Naive thymus-derived CD4-positive, alpha-beta T cell (primary cell): ENCODE measurements at regions of chr1 and their contacts with region 1.

Region 1: GRCh38 chr1:157156058-157156541 is 17.9 kb upstream of the ETV3 start:
- DNase-seq: peak; percentile 52 to 81 (median 67)
- ATAC-seq: peak; percentile 84
- H3K4me3 ChIP-seq: no peak overlapping the region
- H3K4me3 Mint-ChIP-seq: peak overlapping the region in 8 of 10 donors; percentile 52 to 73 (median 65)
- H3K27ac ChIP-seq: no peak overlapping the region
- H3K27ac Mint-ChIP-seq: peak overlapping the region in 2 of 9 donors; percentile 26 to 51
- H3K4me1 ChIP-seq: peaks cover 8 to 28% of the 10 kb centered on the region in 2 donors
- H3K4me1 Mint-ChIP-seq: peaks cover 15 to 36% (median 26%) of the 10 kb centered on the region in 7 donors
- H3K27me3 ChIP-seq: no peaks in the 10 kb centered on the region
- H3K27me3 Mint-ChIP-seq: peaks cover 6 to 22% (median 9%) of the 10 kb centered on the region in 5 donors

Region 2: DNA sequence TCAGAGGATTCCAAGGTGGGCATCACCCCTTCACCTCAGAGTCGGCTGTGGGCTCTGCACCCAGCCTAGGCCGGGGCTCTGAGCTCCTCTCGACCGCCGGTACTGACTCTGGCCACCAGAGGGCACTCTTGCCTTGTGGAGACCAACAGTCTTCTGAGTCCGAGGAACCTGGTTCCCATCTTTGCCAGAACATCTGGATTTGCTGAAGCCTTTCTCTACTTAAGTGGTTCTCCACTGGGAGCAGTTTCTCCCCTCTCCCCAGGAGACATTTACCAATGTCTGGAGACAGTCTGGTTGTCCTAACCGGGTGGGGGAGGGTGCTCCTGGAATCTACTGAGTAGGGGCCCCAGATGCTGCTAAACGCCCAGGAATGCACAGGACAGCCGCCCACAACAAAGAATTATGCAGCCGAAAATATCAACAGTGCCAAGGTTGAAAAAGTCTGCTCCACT is 65.9 kb before region 1 on chr1:
- CTCF ChIA-PET with region 1: interaction called, 292 read pairs
- POLR2A ChIA-PET with region 1: interaction called, 10 read pairs
- intact Hi-C with region 1: loop called (anchors 1 kb)
- DNase-seq: peak; percentile 64 to 88 (median 81)
- ATAC-seq: peak; percentile 91
- H3K4me3 ChIP-seq: no peak overlapping the region
- H3K4me3 Mint-ChIP-seq: no peak overlapping the region
- H3K27ac ChIP-seq: no peak overlapping the region
- H3K27ac Mint-ChIP-seq: no peak overlapping the region
- H3K4me1 ChIP-seq: peaks cover 0 to 4% of the 10 kb centered on the region in 2 donors
- H3K4me1 Mint-ChIP-seq: peaks cover 0 to 8% (median 0%) of the 10 kb centered on the region in 7 donors
- H3K27me3 ChIP-seq: no peaks in the 10 kb centered on the region
- H3K27me3 Mint-ChIP-seq: peaks cover 0 to 11% (median 0%) of the 10 kb centered on the region in 5 donors

Region 3: DNA sequence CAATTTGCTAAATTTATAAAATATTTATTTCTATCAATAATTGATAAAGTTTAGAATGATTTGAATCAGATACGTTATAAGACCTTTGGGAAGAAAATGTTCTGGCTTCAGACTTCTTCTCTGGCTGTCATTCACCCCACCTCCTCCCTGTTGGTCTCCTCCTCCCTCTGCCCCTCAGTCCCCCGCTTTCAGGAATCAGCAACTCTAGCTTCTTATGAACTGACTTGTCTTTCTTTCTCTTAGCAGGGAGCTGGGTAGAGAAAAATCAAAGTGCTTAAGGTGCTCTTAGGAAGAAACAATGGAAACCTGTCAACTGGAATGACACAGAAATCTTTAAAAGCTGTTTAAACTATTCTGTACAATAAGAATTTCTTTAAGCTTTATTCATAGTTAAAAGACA is 53.4 kb after region 1 on chr1:
- CTCF ChIA-PET with region 1: no interaction called
- POLR2A ChIA-PET with region 1: no interaction called
- intact Hi-C with region 1: no loop called
- DNase-seq: no peak
- ATAC-seq: no peak
- H3K4me3 ChIP-seq: no peak overlapping the region
- H3K4me3 Mint-ChIP-seq: no peak overlapping the region
- H3K27ac ChIP-seq: no peak overlapping the region
- H3K27ac Mint-ChIP-seq: no peak overlapping the region
- H3K4me1 ChIP-seq: no peaks in the 10 kb centered on the region
- H3K4me1 Mint-ChIP-seq: no peaks in the 10 kb centered on the region
- H3K27me3 ChIP-seq: no peaks in the 10 kb centered on the region
- H3K27me3 Mint-ChIP-seq: peaks cover 19 to 49% (median 40%) of the 10 kb centered on the region in 5 donors